ENCODE measurements at regions of chr16 and their contacts with region 1.

Region 1: DNA sequence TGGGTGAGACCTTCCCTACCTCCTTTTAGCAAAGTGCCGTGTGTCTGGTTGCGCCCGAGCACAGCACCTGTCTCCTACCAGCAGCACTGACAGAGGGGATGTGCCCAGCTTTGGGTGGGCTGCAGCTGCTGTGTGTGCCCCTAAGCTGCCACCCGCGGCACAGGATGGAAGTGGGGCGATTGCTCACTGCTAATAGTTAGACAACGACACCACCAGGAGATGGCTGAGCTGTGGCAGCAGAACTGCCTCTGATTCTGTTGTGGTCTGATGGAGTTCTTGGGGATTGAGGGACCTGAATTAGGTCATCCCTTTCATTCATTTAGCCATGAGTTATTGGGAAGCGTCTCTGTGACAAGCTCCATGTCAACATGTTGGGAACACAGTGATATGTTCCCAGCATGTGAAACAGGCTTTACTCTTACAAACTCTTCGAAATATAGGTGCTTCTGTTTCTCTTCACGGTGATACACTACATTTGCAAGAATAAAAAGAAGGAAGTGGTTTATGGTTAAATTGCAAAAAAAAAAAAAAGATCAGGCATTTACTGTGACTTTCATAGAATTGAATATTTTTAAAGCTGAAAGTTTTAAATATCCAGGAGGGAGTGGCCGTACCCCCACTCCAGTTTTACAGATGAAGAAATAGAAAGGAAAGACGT is 184.4 kb downstream of the MAF start:
- H3K4me3 Mint-ChIP-seq: peak overlapping the region; percentile 15
- H3K27ac Mint-ChIP-seq: peak overlapping the region; percentile 92
- H3K4me1 Mint-ChIP-seq: peaks cover 83% of the 10 kb centered on the region
- H3K27me3 Mint-ChIP-seq: peaks cover 8% of the 10 kb centered on the region

Region 2: DNA sequence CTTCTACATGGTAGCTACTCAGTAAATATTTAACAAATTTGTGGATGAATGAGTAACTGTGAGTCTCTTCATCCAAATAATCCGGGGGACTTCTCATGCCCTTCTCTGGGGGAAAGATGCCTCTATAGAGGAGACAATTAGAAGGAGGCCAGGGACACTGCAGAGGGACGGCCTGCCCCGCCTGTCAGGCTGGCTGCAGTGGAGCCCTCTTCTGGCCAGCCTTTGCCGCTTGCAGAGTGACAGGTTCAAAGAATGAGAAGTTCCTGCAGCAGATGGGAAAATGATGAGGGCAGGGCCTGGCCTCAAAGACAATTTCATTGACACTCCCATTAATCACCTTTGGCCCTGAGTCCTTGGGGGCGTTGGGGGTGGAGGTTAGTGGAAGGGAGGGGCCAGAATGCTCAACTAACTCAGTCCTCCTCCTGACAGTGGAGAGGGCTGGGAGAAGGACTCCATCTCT is 154.6 kb before region 1 on chr16:
- intact Hi-C with region 1: loop called (anchors 10 kb)
- H3K4me3 Mint-ChIP-seq: no peak overlapping the region
- H3K27ac Mint-ChIP-seq: peak overlapping the region; percentile 56
- H3K4me1 Mint-ChIP-seq: peaks cover 68% of the 10 kb centered on the region
- H3K27me3 Mint-ChIP-seq: peaks cover 19% of the 10 kb centered on the region

Region 3: DNA sequence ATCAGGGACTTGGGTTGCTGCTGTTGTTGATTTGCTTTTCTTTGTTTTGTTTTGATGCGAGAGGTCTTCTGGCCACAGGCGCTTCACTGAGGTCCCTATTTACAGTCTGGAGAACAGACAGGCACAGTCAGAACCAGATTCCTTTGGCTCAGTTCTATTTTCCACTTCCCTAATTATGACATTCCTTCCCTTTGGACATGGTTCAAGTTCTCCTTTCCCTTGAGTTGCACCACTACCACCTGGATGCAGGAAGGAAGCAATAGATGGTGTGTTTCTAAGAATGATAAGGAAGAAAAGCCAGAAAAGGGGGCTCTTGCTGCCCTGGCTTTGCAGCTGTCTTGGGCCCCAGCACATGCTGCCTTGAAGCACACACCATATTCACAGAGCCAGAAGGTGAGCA is 23.8 kb after region 1 on chr16:
- intact Hi-C with region 1: no loop called
- H3K4me3 Mint-ChIP-seq: peak overlapping the region; percentile 50
- H3K27ac Mint-ChIP-seq: peak overlapping the region; percentile 82
- H3K4me1 Mint-ChIP-seq: peaks cover 65% of the 10 kb centered on the region
- H3K27me3 Mint-ChIP-seq: peaks cover 19% of the 10 kb centered on the region

Region 4: GRCh38 chr16:79451196-79451816 is 35.2 kb after region 1 on chr16:
- intact Hi-C with region 1: loop called (anchors 5 kb)
- H3K4me3 Mint-ChIP-seq: no peak overlapping the region
- H3K27ac Mint-ChIP-seq: peak overlapping the region; percentile 81
- H3K4me1 Mint-ChIP-seq: peaks cover 38% of the 10 kb centered on the region
- H3K27me3 Mint-ChIP-seq: peaks cover 3% of the 10 kb centered on the region

Region 5: GRCh38 chr16:79618692-79619050 is 202.6 kb after region 1 on chr16:
- intact Hi-C with region 1: no loop called
- H3K4me3 Mint-ChIP-seq: no peak overlapping the region
- H3K27ac Mint-ChIP-seq: no peak overlapping the region
- H3K4me1 Mint-ChIP-seq: no peaks in the 10 kb centered on the region
- H3K27me3 Mint-ChIP-seq: peaks cover 5% of the 10 kb centered on the region

Region 6: DNA sequence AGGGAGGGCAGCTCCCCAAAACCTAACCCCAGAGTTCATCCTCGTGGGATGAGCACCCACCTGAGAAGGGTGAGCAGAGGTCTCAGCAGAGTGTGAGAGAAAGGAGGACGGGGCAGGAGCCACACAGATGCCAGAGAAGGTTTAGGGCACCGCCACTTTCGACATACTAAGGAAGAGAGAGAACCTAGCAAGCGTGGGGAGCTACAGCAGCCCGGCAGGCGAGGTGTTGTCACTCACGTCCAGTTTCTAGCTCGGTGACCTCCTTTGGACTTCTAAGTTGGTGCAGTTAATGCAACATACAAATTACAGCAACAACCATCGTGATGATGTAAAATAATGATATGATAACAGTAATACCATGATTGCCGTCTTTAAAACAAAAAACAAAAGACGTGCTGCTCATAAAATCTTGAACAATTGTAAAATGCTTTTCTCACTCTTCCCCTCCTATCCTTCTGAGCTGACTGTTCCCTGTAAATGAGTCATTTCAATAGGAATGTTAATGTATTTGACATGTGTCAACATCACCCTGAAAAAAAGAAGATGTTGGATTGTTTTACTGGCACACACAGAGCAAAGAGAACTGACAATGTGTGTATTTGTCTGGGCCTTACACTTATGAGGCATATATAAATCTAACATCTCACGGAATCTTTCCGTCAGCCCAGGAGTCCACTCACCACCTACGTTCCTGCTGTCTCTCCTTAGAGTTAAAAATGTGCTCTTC is 342.7 kb after region 1 on chr16:
- intact Hi-C with region 1: no loop called
- H3K4me3 Mint-ChIP-seq: no peak overlapping the region
- H3K27ac Mint-ChIP-seq: no peak overlapping the region
- H3K4me1 Mint-ChIP-seq: no peaks in the 10 kb centered on the region
- H3K27me3 Mint-ChIP-seq: no peaks in the 10 kb centered on the region

Measured in dendritic cell treated with granulocyte-macrophage colony-stimulating factor and Interleukin-4, amounts not matched to agents 40 ng/mL and 50 ng/mL, for 4 days (primary cell).